ENCODE measurements at regions of chr13 and their contacts with region 1.

Region 1: DNA sequence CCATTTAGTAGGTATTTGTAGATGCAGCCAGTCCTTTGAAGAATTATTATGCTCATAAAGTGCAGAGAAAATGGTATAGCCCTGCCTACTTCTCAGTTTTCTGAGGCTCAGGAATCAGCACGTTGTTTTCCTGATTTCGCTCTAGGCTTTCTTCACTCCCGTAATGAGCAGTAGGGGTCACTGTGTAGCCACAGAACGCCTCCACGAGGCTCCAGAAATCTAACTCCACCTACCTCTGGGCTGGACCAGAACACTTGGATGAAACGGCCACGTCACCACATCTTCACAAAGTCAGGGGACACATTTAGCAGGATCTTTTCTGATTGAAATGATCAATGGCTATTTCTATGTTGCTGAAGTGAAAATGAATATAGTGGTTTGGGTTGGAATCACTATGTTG is 49.8 kb upstream of the GTF3A start:
- DNase-seq: peak; percentile 88
- ATAC-seq: peak; percentile 98
- H3K4me3 ChIP-seq: no peak overlapping the region
- H3K27ac ChIP-seq: no peak overlapping the region
- H3K4me1 ChIP-seq: no peaks in the 10 kb centered on the region
- H3K27me3 ChIP-seq: peaks cover 22% of the 10 kb centered on the region
- CTCF ChIP-seq: peak; percentile 89
- POLR2A ChIP-seq: no peak
- RAD21 ChIP-seq: peak; percentile 82

Region 2: GRCh38 chr13:27424246-27425157 is 49.9 kb after region 1 on chr13 and contains the start of gene GTF3A:
- CTCF ChIA-PET with region 1: interaction called, 3 read pairs
- POLR2A ChIA-PET with region 1: no interaction called
- dilution Hi-C with region 1: no loop called
- in situ Hi-C with region 1: no loop called
- intact Hi-C with region 1: loop called (anchors 2 kb)
- DNase-seq: peak; percentile 82
- ATAC-seq: peak; percentile 92
- H3K4me3 ChIP-seq: peak within 1 kb of the TSS; percentile 57
- H3K27ac ChIP-seq: peak within 1 kb of the TSS; percentile 81
- H3K4me1 ChIP-seq: peaks cover 15% of the 10 kb centered on the region
- H3K27me3 ChIP-seq: peaks cover 2% of the 10 kb centered on the region; the same call in 1 of the 2 replicates
- CTCF ChIP-seq: no peak
- POLR2A ChIP-seq: peak; percentile 51; the same call in 1 of the 2 replicates
- RAD21 ChIP-seq: no peak
- total RNA-seq, gene GTF3A: 116 and 148 TPM in 2 replicates

Region 3: DNA sequence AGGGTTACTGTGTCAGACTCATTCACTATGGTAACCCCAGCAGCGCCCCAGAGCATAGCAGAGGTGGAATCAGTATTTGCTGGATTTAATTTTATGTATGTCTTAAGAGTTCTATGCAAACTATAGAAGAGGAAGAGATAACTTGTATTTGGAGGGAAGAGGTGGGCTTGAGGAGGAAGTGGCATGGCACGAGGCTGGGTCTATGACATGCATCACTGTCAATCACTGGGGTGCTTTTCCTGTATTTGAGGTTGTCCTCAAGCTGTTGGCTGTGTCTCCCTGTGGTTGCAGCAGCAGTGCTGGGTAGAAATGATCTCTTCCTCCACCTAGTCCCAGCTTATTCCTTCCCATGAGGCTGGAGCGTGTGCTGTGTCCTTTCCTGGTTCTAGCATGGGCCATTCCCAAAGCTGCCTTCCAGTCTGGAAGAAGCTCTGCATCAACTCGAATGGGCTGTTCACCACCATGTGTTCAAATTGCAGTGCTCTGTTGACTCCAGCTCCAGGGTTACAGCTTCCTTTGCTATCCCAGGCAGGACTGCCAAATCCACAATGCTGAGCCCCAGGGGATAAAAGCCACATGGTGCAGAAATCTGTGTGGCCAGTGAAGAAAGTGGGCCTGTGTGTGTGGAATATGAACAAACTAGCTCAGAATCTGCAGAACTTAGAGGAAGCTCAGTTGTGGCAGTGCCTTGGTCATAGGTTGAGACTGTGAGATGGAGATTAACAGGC is 148.9 kb after region 1 on chr13:
- CTCF ChIA-PET with region 1: no interaction called
- POLR2A ChIA-PET with region 1: no interaction called
- dilution Hi-C with region 1: no loop called
- in situ Hi-C with region 1: loop called (anchors 10 kb)
- intact Hi-C with region 1: no loop called
- DNase-seq: no peak
- ATAC-seq: no peak
- H3K4me3 ChIP-seq: no peak overlapping the region
- H3K27ac ChIP-seq: no peak overlapping the region
- H3K4me1 ChIP-seq: no peaks in the 10 kb centered on the region
- H3K27me3 ChIP-seq: peaks cover 21% of the 10 kb centered on the region
- CTCF ChIP-seq: no peak
- POLR2A ChIP-seq: no peak
- RAD21 ChIP-seq: no peak

Region 4: GRCh38 chr13:27533155-27533643 is 158.5 kb after region 1 on chr13:
- CTCF ChIA-PET with region 1: no interaction called
- POLR2A ChIA-PET with region 1: no interaction called
- dilution Hi-C with region 1: no loop called
- in situ Hi-C with region 1: loop called (anchors 10 kb)
- intact Hi-C with region 1: loop called (anchors 2 kb)
- DNase-seq: peak; percentile 59
- ATAC-seq: peak; percentile 100
- H3K4me3 ChIP-seq: no peak overlapping the region
- H3K27ac ChIP-seq: no peak overlapping the region
- H3K4me1 ChIP-seq: no peaks in the 10 kb centered on the region
- H3K27me3 ChIP-seq: peaks cover 4% of the 10 kb centered on the region
- CTCF ChIP-seq: peak; percentile 94
- POLR2A ChIP-seq: 0 out of 2 replicates have a peak, but pooled peaks have one; percentile 32
- RAD21 ChIP-seq: peak; percentile 84

Region 5: GRCh38 chr13:27953676-27954405 is 579.2 kb after region 1 on chr13:
- CTCF ChIA-PET with region 1: no interaction called
- POLR2A ChIA-PET with region 1: no interaction called
- dilution Hi-C with region 1: no loop called
- in situ Hi-C with region 1: no loop called
- intact Hi-C with region 1: loop called (anchors 10 kb)
- DNase-seq: peak; percentile 55
- ATAC-seq: peak; percentile 99
- H3K4me3 ChIP-seq: peak overlapping the region; percentile 45
- H3K27ac ChIP-seq: no peak overlapping the region
- H3K4me1 ChIP-seq: no peaks in the 10 kb centered on the region
- H3K27me3 ChIP-seq: peaks cover 54% of the 10 kb centered on the region
- CTCF ChIP-seq: peak; percentile 81
- POLR2A ChIP-seq: no peak
- RAD21 ChIP-seq: peak; percentile 66